Activated B cell treated with CpG ODN at 0.5 μM for 24 hours (primary cell): ENCODE measurements at regions of chr2 and their contacts with region 1.

Region 1: DNA sequence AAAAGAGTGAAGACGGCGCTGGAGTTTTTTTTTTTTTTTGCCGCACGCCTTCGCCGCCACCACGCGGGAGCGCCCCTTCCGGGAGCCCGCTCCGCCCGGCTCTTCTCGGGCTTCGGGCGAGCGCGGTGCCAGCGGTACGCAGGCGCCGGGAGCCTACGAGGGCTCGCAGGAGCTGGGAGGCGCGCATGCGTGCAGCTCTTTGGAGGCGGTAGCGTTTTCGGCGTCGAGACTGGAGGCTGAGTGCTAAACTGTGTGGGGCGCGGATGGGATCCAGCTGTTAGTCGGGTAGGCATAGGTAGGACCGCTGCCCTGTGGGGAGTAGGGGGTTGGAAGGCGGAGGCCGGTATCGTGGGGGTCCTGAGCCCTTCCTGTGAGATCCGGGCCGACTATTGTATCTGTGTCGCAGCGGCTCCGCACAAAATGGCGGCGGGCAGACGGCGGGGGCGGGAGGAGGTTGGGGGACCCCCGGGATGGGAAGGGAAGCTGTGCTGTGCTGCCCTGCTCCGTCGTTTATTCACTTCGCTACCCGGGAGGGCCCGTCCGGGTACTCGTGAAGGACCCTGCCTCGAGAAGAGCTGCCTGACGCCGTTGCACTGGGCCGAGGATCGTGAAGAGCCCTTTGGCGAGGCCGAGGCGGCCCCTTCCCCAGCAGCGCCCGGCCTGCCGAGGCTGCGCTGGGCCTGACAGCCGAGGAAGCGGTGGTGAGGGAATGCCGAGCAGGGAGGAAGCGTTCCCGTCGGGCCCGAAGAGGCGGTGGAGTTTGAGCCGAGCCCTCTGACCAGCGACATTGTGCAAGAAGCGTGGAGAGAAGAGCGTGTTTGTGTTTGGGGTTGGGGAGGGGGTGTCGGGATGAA is at the start of gene ZNF638:
- DNase-seq: peak; percentile 86
- ATAC-seq: peak; percentile 99
- H3K4me3 Mint-ChIP-seq: peak within 1 kb of the TSS; percentile 100
- H3K27ac Mint-ChIP-seq: peak within 1 kb of the TSS; percentile 100
- H3K4me1 Mint-ChIP-seq: peaks cover 42% of the 10 kb centered on the region
- H3K27me3 Mint-ChIP-seq: no peaks in the 10 kb centered on the region
- CTCF ChIP-seq: no peak
- total RNA-seq, gene ZNF638: 125 and 152 TPM in 2 replicates

Region 2: GRCh38 chr2:71049365-71050360 is 282.1 kb before region 1 on chr2:
- CTCF ChIA-PET with region 1: no interaction called
- POLR2A ChIA-PET with region 1: no interaction called
- intact Hi-C with region 1: loop called (anchors 1 kb)
- DNase-seq: no peak
- ATAC-seq: peak; percentile 82
- H3K4me3 Mint-ChIP-seq: no peak overlapping the region
- H3K27ac Mint-ChIP-seq: no peak overlapping the region
- H3K4me1 Mint-ChIP-seq: peaks cover 7% of the 10 kb centered on the region
- H3K27me3 Mint-ChIP-seq: no peaks in the 10 kb centered on the region
- CTCF ChIP-seq: no peak

Region 3: GRCh38 chr2:71130113-71130904 is 201.5 kb before region 1 on chr2 and contains the starts of genes MCEE and MPHOSPH10:
- CTCF ChIA-PET with region 1: no interaction called
- POLR2A ChIA-PET with region 1: interaction called, 13 read pairs
- intact Hi-C with region 1: loop called (anchors 1 kb)
- DNase-seq: peak; percentile 79
- ATAC-seq: peak; percentile 94
- H3K4me3 Mint-ChIP-seq: no peak within 1 kb of the TSS
- H3K27ac Mint-ChIP-seq: no peak within 1 kb of the TSS
- H3K4me1 Mint-ChIP-seq: peaks cover 17% of the 10 kb centered on the region
- H3K27me3 Mint-ChIP-seq: no peaks in the 10 kb centered on the region
- CTCF ChIP-seq: no peak
- total RNA-seq, gene MCEE: 11.1 and 12.2 TPM in 2 replicates
- total RNA-seq, gene MPHOSPH10: 47.6 and 47.8 TPM in 2 replicates

Region 4: DNA sequence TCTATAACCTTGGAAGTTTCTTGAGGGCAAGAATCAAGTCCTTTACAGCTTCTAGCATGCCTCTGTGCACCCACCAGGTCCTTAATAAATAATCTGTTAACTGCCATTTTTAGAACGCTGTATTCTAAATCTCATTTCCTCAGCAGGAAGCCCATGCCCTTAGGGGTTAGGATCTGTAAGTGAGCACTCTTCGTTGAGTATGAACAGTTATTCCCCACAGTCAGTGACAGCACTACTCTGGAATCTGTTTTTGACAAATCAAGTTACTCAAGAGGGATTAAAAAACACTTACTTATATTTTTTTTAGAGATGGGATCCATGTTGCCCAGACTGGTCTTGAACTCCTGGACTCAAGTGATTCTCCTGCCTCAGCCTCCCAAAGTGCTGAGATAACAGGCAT is 119.5 kb before region 1 on chr2:
- CTCF ChIA-PET with region 1: no interaction called
- POLR2A ChIA-PET with region 1: no interaction called
- intact Hi-C with region 1: no loop called
- DNase-seq: no peak
- ATAC-seq: no peak
- H3K4me3 Mint-ChIP-seq: no peak overlapping the region
- H3K27ac Mint-ChIP-seq: no peak overlapping the region
- H3K4me1 Mint-ChIP-seq: no peaks in the 10 kb centered on the region
- H3K27me3 Mint-ChIP-seq: no peaks in the 10 kb centered on the region
- CTCF ChIP-seq: no peak

Region 5: DNA sequence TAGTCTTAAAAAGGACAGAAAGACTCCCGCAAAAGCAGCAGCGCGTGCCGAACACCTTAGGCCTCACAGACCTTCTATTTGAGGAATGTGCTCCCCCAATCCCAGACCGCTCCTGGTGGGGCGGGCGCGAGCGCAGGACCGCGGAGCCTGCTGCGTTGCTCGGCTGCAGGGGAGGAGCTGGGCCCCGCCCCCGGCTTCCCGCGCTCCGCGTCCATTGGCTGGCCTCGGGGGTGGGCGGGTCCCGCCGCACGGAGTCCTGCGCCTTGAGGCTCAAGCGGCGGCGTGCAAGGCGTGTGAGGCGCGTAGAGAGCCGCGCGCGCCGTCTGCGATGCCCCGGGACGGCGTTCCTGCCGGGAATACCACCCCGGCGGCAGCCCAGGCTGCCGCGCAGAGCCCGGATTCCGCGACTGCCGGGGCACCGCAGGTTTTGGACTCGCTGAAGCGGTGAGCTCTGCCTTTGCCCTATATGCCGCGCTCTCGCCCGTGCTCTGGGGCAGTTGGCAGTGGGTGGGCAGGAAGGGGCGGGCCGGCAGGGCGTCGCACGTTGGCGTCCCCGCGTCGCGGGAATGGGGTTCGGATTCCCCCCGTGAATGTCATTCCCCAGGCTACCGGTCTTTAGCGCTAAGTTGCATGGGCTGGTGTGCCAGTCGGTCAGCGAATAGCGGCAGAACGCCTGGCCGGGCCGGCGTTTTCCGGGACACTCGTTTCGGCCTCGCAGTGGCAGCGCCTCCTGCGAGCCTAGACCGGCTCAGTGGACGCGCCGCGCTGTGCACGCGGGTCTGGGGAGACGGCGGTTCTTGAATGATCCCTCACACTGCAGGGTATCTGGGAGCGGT is 55.3 kb before region 1 on chr2:
- CTCF ChIA-PET with region 1: interaction called, 4 read pairs
- POLR2A ChIA-PET with region 1: interaction called, 8 read pairs
- intact Hi-C with region 1: loop called (anchors 1 kb)
- DNase-seq: peak; percentile 90
- ATAC-seq: peak; percentile 99
- H3K4me3 Mint-ChIP-seq: peak overlapping the region; percentile 84
- H3K27ac Mint-ChIP-seq: no peak overlapping the region
- H3K4me1 Mint-ChIP-seq: peaks cover 12% of the 10 kb centered on the region
- H3K27me3 Mint-ChIP-seq: peaks cover 47% of the 10 kb centered on the region
- CTCF ChIP-seq: no peak

Region 6: GRCh38 chr2:71347517-71347916 is 15.7 kb after region 1 on chr2:
- CTCF ChIA-PET with region 1: no interaction called
- POLR2A ChIA-PET with region 1: interaction called, 4 read pairs
- intact Hi-C with region 1: loop called (anchors 2 kb)
- DNase-seq: no peak
- ATAC-seq: no peak
- H3K4me3 Mint-ChIP-seq: no peak overlapping the region
- H3K27ac Mint-ChIP-seq: no peak overlapping the region
- H3K4me1 Mint-ChIP-seq: peaks cover 12% of the 10 kb centered on the region
- H3K27me3 Mint-ChIP-seq: no peaks in the 10 kb centered on the region
- CTCF ChIP-seq: no peak